PC-3 (cell line): ENCODE measurements at regions of chr5 and their contacts with region 1.

Region 1: GRCh38 chr5:135466178-135467050 is 14.3 kb upstream of the TIFAB start:
- DNase-seq: peak; percentile 58
- ATAC-seq: peak; percentile 88
- H3K4me3 ChIP-seq: no peak overlapping the region
- H3K27ac ChIP-seq: no peak overlapping the region
- H3K4me1 ChIP-seq: no peaks in the 10 kb centered on the region
- H3K27me3 ChIP-seq: peaks cover 17% of the 10 kb centered on the region
- CTCF ChIP-seq: peak; percentile 77

Region 2: GRCh38 chr5:135551593-135552447 is 85.4 kb after region 1 on chr5:
- CTCF ChIA-PET with region 1: interaction called, 25 read pairs
- POLR2A ChIA-PET with region 1: interaction called, 3 read pairs
- intact Hi-C with region 1: loop called (anchors 1 kb)
- DNase-seq: peak; percentile 83
- ATAC-seq: peak; percentile 87
- H3K4me3 ChIP-seq: no peak overlapping the region
- H3K27ac ChIP-seq: no peak overlapping the region
- H3K4me1 ChIP-seq: no peaks in the 10 kb centered on the region
- H3K27me3 ChIP-seq: peaks cover 9% of the 10 kb centered on the region
- CTCF ChIP-seq: peak; percentile 80

Region 3: GRCh38 chr5:135565725-135566421 is 99.5 kb after region 1 on chr5:
- CTCF ChIA-PET with region 1: interaction called, 10 read pairs
- POLR2A ChIA-PET with region 1: no interaction called
- intact Hi-C with region 1: loop called (anchors 1 kb)
- DNase-seq: peak; percentile 65
- ATAC-seq: peak; percentile 70
- H3K4me3 ChIP-seq: no peak overlapping the region
- H3K27ac ChIP-seq: no peak overlapping the region
- H3K4me1 ChIP-seq: no peaks in the 10 kb centered on the region
- H3K27me3 ChIP-seq: no peaks in the 10 kb centered on the region
- CTCF ChIP-seq: peak; percentile 86